HEK293 (cell line): ENCODE measurements at regions of chr1 and their contacts with region 1.

Region 1: GRCh38 chr1:26889551-26890466 is at the start of gene GPN2:
- H3K4me3 ChIP-seq: peak within 1 kb of the TSS; percentile 74
- H3K27ac ChIP-seq: peak within 1 kb of the TSS; percentile 73
- H3K4me1 ChIP-seq: no peaks in the 10 kb centered on the region
- CTCF ChIP-seq: peak; percentile 29; the same call in 1 of the 2 replicates

Region 2: DNA sequence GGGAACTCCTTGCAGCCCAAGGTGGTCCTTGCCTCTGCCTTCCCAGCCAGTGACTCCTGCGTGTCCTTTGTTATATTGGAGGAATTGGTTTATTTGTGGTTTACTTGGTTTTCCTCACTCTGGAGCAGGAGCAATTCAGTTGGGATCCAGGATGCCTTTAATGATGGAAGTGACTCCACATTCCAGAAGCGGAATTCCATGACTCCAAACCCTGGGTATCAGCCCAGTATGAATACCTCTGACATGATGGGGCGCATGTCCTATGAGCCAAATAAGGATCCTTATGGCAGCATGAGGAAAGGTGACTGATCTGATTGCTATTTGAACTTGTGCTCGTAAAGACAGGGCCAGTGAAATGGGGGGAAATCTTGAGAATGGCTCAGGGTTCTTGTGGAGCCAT is 117.1 kb before region 1 on chr1:
- CTCF ChIA-PET with region 1: no interaction called
- POLR2A ChIA-PET with region 1: no interaction called
- H3K4me3 ChIP-seq: no peak overlapping the region
- H3K27ac ChIP-seq: no peak overlapping the region
- H3K4me1 ChIP-seq: no peaks in the 10 kb centered on the region
- CTCF ChIP-seq: no peak

Region 3: GRCh38 chr1:26864610-26865527 is 24.9 kb before region 1 on chr1:
- CTCF ChIA-PET with region 1: no interaction called
- POLR2A ChIA-PET with region 1: interaction called, 30 read pairs
- H3K4me3 ChIP-seq: peak overlapping the region; percentile 59
- H3K27ac ChIP-seq: peak overlapping the region; percentile 61
- H3K4me1 ChIP-seq: 0 out of 2 replicates have a peak, but pooled peaks cover 2% of the 10 kb centered on the region
- CTCF ChIP-seq: peak; percentile 76

Region 4: DNA sequence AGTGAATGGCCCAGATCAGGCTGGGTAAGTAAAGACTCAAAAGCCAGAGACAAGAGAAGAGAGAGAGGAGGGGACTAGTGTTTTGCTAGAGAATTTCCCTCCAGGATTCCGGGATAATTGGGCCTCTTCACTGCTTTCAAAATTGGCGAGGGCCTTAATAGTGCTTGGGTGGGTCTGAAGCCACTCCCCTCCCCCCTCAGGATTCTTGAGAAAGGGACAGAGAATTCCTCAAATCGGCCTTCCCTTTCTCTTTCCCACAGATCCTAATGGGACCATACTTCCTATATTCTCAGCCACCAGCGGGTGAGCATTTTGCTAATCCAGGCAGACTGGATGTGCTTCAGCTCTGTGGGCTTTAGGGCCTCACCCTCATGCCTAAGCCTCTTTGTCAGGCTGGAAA is 14.9 kb before region 1 on chr1:
- CTCF ChIA-PET with region 1: interaction called, 12 read pairs
- POLR2A ChIA-PET with region 1: interaction called, 5 read pairs
- H3K4me3 ChIP-seq: no peak overlapping the region
- H3K27ac ChIP-seq: no peak overlapping the region
- H3K4me1 ChIP-seq: no peaks in the 10 kb centered on the region
- CTCF ChIP-seq: no peak

Region 5: DNA sequence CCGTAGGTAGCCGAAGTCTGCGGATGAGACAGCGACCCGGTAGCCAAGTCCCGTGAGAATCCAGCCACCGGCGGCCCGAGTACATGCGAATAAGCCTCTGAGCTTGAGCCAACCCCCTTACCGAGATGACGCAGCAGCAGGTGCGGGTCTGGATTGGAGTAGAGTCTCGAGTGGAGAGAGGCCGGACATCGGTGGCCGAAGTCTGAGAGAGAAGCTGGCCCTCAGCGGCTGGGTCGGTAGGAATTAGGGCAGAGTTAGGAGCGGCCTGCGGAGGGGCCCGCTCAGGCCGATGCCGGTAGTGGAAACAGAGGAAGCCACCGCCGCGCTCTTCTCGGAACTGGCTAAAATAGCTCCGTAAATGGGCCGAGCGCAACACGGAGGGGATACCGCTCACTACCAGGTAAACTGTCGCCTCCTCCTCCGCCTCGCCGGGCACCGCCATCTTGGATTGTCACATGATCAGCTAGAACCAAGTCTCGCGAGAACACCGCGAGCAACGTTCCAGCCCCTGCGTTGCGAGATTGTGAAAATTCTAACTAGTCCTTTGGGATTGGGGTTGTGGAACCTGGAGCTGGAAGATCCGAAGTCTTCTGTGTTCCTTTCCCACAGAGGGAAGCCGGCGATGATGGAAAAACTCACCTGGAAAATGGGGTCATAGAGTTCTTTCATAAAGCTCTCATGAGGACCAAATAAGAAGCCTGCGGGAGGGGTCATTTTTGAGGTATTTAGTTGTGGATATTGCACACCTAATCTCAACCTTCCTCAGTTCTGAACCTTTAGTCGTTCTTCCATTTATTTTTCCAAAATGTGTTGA is 10.4 kb after region 1 on chr1 and contains the start of gene GPATCH3:
- CTCF ChIA-PET with region 1: interaction called, 6 read pairs
- POLR2A ChIA-PET with region 1: interaction called, 53 read pairs
- H3K4me3 ChIP-seq: peak within 1 kb of the TSS; percentile 99
- H3K27ac ChIP-seq: peak within 1 kb of the TSS; percentile 56
- H3K4me1 ChIP-seq: 0 out of 2 replicates have a peak, but pooled peaks cover 4% of the 10 kb centered on the region
- CTCF ChIP-seq: no peak

Region 6: GRCh38 chr1:26921540-26922430 is 32.0 kb after region 1 on chr1 and contains the start of gene NUDC:
- CTCF ChIA-PET with region 1: no interaction called
- POLR2A ChIA-PET with region 1: interaction called, 13 read pairs
- H3K4me3 ChIP-seq: peak within 1 kb of the TSS; percentile 97
- H3K27ac ChIP-seq: peak within 1 kb of the TSS; percentile 67
- H3K4me1 ChIP-seq: peaks cover 7% of the 10 kb centered on the region
- CTCF ChIP-seq: no peak

Region 7: DNA sequence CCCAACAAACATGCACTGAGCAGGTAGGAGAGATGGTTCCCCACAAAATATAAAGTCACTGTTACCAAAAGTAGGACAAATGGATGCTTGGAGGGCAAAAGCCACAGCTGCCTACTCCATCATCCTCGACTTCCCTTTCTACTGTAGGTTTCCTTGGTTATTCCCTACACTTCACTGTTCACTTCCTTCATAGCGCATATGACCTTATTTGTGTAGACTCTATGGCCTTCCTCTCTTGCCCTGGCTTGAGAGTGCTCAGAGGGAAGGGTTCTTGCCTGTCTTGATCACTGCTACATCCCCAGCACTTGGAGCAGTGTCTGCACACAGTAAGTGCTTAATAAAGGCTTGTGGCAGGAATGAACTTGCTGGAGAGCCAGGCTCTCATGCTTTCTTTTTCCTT is 89.1 kb after region 1 on chr1:
- CTCF ChIA-PET with region 1: no interaction called
- POLR2A ChIA-PET with region 1: no interaction called
- H3K4me3 ChIP-seq: no peak overlapping the region
- H3K27ac ChIP-seq: no peak overlapping the region
- H3K4me1 ChIP-seq: no peaks in the 10 kb centered on the region
- CTCF ChIP-seq: no peak